HEK293T (cell line): ENCODE measurements at regions of chr19 and their contacts with region 1.

Region 1: DNA sequence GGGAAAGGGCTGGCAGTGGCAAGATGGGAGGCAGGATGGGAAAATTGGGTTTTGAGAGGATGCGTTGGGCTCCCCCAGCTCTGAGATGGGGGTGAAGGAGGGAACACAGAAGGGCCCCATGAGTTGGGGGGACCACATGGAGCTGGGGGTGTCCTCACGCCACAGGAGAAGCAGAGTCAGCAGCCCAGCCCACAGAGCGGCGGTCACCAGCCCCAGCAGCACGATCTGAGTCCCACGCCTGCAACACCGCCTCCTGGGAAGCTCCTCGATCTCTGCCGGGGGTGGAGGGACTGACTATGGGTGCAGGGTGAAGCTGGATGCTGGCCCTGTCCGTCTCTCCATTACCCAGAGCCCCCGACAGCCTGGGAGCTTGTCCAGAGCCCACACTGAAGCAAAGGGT is 3.3 kb downstream of the FCER2 start:
- DNase-seq: no peak

Region 2: DNA sequence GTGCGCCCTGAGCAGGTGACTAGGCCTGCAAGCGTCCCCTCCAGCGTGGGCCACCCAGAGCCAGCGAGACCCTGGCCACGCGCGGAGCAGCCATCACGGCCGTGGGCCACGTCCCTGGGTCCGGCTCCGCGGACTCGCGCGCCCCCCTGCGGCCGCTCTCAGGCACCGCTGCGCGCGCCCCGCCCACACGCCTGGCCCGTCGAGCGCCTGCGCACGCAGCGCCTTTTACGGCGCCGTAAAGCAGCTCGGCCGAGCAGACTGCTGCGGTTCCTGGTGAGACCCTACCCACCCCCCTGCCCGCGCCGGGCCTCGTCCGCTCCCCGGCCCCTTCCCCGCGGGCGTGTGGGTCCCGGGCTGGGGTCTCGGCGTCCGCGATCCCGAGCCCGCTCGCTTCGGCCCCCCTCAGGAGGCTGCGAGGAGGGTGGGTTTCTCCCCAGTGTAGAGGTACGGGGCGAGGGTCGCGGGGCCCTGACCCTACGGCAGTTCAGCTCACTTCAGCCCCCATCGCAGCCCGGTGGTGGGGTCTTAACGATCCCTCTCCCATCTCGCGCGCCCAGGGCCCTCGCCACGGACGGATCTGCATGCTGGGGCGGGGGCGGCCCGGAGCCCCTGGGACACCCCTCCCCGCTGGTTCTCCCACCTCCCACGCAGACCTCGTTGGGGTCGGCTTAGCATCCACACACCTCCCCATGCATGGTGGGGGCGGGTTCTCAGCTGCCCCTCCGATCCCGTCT is 17.8 kb before region 1 on chr19 and contains the start of gene TRAPPC5:
- CTCF ChIA-PET with region 1: interaction called, 4 read pairs
- POLR2A ChIA-PET with region 1: interaction called, 10 read pairs
- DNase-seq: peak; percentile 92

Region 3: GRCh38 chr19:7710616-7711015 is 12.0 kb after region 1 on chr19:
- CTCF ChIA-PET with region 1: no interaction called
- POLR2A ChIA-PET with region 1: no interaction called
- DNase-seq: no peak

Region 4: GRCh38 chr19:7748770-7749209 is 50.2 kb after region 1 on chr19:
- CTCF ChIA-PET with region 1: no interaction called
- POLR2A ChIA-PET with region 1: no interaction called
- DNase-seq: no peak

Region 5: GRCh38 chr19:7874076-7874896 is 175.7 kb after region 1 on chr19 and contains the start of gene PRR36:
- CTCF ChIA-PET with region 1: no interaction called
- POLR2A ChIA-PET with region 1: no interaction called
- DNase-seq: peak; percentile 61